AG04450 (cell line): ENCODE measurements at regions of chr22 and their contacts with region 1.

Region 1: GRCh38 chr22:32265882-32266767 is 11.0 kb upstream of the SLC5A4 start:
- DNase-seq: peak; percentile 13
- H3K4me3 ChIP-seq: no peak overlapping the region
- H3K27ac ChIP-seq: no peak overlapping the region
- H3K27me3 ChIP-seq: no peaks in the 10 kb centered on the region
- CTCF ChIP-seq: peak; percentile 89

Region 2: DNA sequence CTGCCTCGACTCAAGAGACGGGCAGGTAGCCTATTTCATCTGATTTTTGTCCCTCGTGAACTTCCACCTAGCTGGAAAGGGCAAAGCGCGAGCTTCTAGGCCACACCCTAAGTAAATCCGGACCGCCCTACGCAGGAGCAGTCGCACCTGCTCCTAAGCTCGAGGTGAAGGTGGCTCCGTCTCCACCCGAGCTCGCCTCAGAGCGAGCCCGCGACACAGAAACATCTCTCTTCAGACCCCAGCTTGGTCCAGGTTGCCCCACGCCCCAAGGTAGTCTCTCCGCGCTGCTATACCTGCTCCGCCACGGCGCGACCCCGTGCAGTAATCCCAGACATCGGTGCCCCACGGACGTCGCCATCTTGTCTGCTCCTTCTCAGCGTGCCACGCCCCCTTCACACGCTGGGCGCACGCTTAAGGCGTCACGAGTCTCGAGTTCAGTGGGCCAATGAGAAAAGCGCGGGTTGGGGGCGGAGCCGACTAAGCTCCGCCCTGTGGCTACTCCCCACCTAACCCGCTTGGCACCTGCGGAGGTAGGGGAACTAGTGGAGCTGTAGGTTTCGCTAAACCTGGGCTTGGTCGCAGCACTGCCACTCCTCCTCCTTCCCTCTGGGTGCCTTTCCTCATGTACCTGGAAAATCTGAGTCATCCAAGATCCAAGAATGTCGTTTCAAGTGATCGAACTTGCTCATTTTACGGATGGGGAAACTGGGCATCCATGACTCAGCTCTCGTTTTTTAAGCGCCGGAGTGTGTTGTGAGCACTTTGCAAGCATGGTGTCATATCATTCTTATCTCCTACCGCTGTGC is 604.1 kb before region 1 on chr22 and contains the start of gene PISD:
- CTCF ChIA-PET with region 1: interaction called, 26 read pairs
- POLR2A ChIA-PET with region 1: no interaction called
- DNase-seq: peak; percentile 74
- H3K4me3 ChIP-seq: peak within 1 kb of the TSS; percentile 98
- H3K27ac ChIP-seq: peak within 1 kb of the TSS; percentile 88
- H3K27me3 ChIP-seq: no peaks in the 10 kb centered on the region
- CTCF ChIP-seq: no peak
- polyA plus RNA-seq, gene PISD: 21.6 and 26.6 TPM in 2 replicates

Region 3: DNA sequence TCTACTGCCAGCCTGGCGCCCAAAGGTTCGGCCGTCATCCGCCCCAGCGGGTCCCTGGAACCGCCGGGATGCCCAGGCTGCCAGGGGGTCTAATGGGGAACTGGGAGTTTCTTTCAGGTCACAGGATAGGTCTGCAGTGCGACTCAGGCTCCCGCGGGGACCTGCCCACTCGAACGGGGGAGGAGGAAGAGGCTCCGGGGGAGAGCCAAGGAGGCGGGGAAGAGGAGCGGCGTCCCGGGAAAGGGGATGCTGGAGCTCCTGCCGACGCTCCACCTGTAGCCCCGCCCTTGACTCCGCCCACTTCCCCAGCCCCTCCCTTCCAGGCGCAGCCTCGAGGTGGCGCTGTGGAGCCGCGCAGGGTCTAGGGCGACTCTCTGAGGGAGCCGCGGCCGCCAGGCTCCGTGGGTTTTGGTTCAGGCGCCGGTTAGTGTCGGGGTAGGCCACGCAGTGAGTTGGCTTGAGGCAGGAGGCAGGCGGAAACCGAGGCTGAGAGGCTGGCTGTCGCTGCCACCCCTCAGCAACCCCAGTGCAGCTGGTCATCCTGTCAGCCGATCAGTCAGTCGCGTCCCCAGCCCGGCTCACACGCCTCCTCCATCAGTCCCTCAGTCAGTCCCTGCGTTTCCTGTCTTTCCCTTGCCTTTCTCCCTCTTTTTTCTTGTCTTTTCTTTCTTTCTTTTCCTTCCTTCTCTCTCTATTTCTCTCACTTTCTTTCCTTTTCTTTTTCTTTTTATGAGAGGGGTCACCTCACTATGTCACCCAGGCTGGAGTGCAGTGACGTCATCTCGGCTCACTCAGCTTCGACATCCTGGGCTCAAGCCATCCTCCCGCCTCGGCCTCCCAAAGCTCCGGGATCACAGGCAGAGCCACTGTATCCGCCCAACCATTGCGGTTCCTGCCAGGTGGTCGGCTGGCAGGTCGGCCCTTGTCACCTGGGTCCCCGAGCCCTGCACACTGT is 295.4 kb before region 1 on chr22:
- CTCF ChIA-PET with region 1: interaction called, 16 read pairs
- POLR2A ChIA-PET with region 1: no interaction called
- DNase-seq: peak; percentile 7
- H3K4me3 ChIP-seq: peak overlapping the region; percentile 63
- H3K27ac ChIP-seq: no peak overlapping the region
- H3K27me3 ChIP-seq: peaks cover 2% of the 10 kb centered on the region
- CTCF ChIP-seq: peak; percentile 89

Region 4: GRCh38 chr22:31977141-31977841 is 288.8 kb before region 1 on chr22:
- CTCF ChIA-PET with region 1: interaction called, 64 read pairs
- POLR2A ChIA-PET with region 1: no interaction called
- DNase-seq: peak; percentile 13
- H3K4me3 ChIP-seq: no peak overlapping the region
- H3K27ac ChIP-seq: no peak overlapping the region
- H3K27me3 ChIP-seq: peaks cover 2% of the 10 kb centered on the region
- CTCF ChIP-seq: peak; percentile 82

Region 5: DNA sequence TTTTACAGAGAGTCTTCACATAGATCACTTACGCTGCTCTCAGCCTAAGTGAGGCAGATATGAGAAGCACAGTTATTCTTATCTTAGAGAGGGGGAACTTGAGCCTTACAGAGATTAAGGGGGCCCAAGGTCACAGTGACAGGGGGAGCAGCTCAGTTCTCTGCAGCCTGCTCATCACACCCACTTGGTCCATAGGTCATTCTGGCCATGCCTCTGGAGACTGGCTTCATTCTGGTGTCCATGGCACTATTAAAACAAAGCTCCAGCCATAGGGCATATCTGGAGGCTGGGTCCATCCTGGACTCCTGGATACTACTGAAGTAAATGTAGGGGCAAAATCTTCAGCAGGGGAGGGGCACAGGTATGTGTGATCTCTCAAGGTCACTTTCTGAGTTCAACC is 16.9 kb before region 1 on chr22:
- CTCF ChIA-PET with region 1: interaction called, 15 read pairs
- POLR2A ChIA-PET with region 1: no interaction called
- DNase-seq: no peak
- H3K4me3 ChIP-seq: no peak overlapping the region
- H3K27ac ChIP-seq: no peak overlapping the region
- H3K27me3 ChIP-seq: no peaks in the 10 kb centered on the region
- CTCF ChIP-seq: no peak

Region 6: GRCh38 chr22:32281072-32281471 is 14.9 kb after region 1 on chr22:
- CTCF ChIA-PET with region 1: interaction called, 18 read pairs
- POLR2A ChIA-PET with region 1: no interaction called
- DNase-seq: no peak
- H3K4me3 ChIP-seq: no peak overlapping the region
- H3K27ac ChIP-seq: no peak overlapping the region
- H3K27me3 ChIP-seq: peaks cover 2% of the 10 kb centered on the region
- CTCF ChIP-seq: no peak